Activated CD4-positive, alpha-beta T cell treated with anti-CD3 and anti-CD28 coated beads, Interleukin-2, amount 10 ng/mL, durations not matched to agents 24 days and 14 days (primary cell): ENCODE measurements at regions of chr6 and their contacts with region 1.

Region 1: DNA sequence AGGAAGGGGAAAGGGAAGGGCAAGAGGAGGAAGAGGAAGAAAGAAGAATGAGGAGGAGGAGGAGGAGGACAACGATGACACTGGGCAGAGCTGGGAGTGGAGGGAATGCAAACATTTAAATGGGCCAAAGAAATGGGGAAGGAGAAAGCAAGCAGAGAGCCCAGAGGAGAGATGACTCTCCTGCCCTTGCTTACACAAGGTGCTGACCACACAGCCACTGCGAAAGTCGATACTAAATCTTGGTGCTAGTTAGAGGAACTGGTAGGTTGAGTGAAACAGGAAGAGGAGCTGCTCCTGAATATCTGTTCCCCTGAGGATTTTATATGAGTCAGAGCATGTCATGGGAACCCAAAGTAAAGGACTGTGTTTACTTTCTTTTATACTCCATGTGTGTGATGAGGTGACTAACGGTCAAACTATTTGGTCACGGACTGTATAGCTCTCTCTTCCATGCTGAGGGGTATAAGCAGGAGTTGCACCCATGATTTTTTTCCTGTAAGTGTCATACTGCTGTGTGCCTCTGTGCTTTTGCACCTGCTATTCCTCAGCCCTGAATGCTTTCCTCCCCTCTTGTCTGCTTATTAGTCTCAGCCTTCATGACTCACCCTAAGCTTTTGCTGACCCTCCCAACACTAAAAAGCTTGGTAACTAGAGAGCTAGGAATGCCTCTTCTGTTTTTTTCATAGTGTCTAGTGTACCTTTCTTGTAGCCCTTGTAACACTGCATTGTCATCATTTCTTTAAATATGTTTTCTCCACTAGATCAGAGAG is 9.5 kb upstream of the PAQR8 start:
- DNase-seq: no peak
- H3K4me3 Mint-ChIP-seq: no peak overlapping the region
- H3K27ac Mint-ChIP-seq: no peak overlapping the region
- H3K4me1 Mint-ChIP-seq: peaks cover 13% of the 10 kb centered on the region
- H3K27me3 Mint-ChIP-seq: peaks cover 3% of the 10 kb centered on the region

Region 2: DNA sequence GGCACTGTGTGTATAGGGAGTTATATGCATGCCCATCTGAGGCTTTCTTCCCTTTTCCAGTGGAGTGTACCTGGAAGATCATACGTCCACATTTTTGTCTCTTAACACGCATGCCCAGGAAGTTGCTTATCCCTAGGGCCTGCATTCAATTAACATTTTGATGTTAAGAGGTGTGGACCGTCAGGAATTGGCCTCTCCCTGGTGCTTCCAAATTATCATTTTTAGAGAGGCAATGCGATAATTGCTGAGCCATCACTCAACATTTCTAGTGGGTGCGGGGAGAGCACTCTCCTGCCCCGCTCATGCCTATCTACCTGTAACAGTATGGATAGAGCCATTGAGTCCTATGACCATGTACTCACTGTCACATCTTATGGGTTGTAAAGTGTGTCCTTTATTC is 28.2 kb before region 1 on chr6:
- intact Hi-C with region 1: loop called (anchors 5 kb)
- DNase-seq: no peak
- H3K4me3 Mint-ChIP-seq: no peak overlapping the region
- H3K27ac Mint-ChIP-seq: no peak overlapping the region
- H3K4me1 Mint-ChIP-seq: peaks cover 3% of the 10 kb centered on the region
- H3K27me3 Mint-ChIP-seq: no peaks in the 10 kb centered on the region

Region 3: GRCh38 chr6:52337633-52338290 is 14.7 kb before region 1 on chr6:
- intact Hi-C with region 1: loop called (anchors 2 kb)
- DNase-seq: no peak
- H3K4me3 Mint-ChIP-seq: no peak overlapping the region
- H3K27ac Mint-ChIP-seq: peak overlapping the region; percentile 0
- H3K4me1 Mint-ChIP-seq: peaks cover 28% of the 10 kb centered on the region
- H3K27me3 Mint-ChIP-seq: peaks cover 2% of the 10 kb centered on the region